Heart left ventricle (tissue), 16 donors: ENCODE measurements at regions of chr12 and their contacts with region 1.

Region 1: GRCh38 chr12:73892201-73892600 is 645.4 kb upstream of the ATXN7L3B start:
- DNase-seq: no peak
- ATAC-seq: no peak
- H3K4me3 ChIP-seq: no peak overlapping the region
- H3K27ac ChIP-seq: no peak overlapping the region
- H3K4me1 ChIP-seq: no peaks in the 10 kb centered on the region
- H3K27me3 ChIP-seq: no peaks in the 10 kb centered on the region
- CTCF ChIP-seq: no peak
- POLR2A ChIP-seq: no peak

Region 2: GRCh38 chr12:73863546-73863945 is 28.7 kb before region 1 on chr12:
- intact Hi-C with region 1: no loop called
- DNase-seq: no peak
- ATAC-seq: no peak
- H3K4me3 ChIP-seq: no peak overlapping the region
- H3K27ac ChIP-seq: no peak overlapping the region
- H3K4me1 ChIP-seq: no peaks in the 10 kb centered on the region
- H3K27me3 ChIP-seq: no peaks in the 10 kb centered on the region
- CTCF ChIP-seq: no peak
- POLR2A ChIP-seq: no peak

Region 3: GRCh38 chr12:74166096-74166495 is 273.9 kb after region 1 on chr12:
- intact Hi-C with region 1: loop called in 1 of 10 experiments (anchors 10 kb)
- DNase-seq: no peak
- ATAC-seq: no peak
- H3K4me3 ChIP-seq: no peak overlapping the region
- H3K27ac ChIP-seq: no peak overlapping the region
- H3K4me1 ChIP-seq: no peaks in the 10 kb centered on the region
- H3K27me3 ChIP-seq: no peaks in the 10 kb centered on the region
- CTCF ChIP-seq: no peak
- POLR2A ChIP-seq: no peak